CD4-positive, alpha-beta memory T cell (primary cell): ENCODE measurements at regions of chr2 and their contacts with region 1.

Region 1: DNA sequence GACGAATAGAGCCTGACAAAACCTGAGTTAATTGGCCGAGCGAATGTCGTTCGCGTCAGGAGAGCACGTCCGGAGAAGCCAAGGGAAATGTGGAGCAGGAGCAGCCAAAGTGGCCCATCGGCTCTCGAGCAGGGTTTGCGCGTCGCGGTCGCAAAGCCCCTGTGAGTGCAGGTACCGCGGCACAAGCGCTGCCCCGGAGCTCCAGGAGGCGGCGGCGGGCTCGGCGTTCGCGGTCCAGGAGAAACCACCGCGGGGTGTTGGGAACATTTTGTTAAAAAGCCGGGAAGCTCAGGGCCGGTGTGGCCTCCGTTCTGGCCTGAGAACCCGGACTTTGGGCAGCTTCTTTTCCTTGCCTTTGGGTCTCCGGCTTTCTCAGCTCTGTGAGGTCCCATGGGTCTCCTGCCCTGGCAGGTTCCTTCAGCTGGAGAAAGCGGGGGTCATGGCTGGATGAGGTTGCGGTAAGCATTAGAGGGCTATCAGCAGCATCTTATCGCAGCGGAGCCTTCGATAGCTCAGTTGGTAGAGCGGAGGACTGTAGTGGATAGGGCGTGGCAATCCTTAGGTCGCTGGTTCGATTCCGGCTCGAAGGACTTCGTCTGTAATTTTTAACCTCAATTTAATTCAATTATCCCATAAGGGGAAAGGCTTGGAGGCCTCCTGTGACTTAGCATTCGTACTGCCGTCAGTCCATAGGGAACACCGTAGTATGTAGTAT is 1.0 kb upstream of the AGBL5 start:
- DNase-seq: peak; percentile 93 to 94 (median 93)
- H3K4me3 ChIP-seq: peak overlapping the region; percentile 89 to 93
- H3K4me3 Mint-ChIP-seq: peak overlapping the region; percentile 93 to 100 (median 99)
- H3K27ac ChIP-seq: peak overlapping the region; percentile 78
- H3K27ac Mint-ChIP-seq: peak overlapping the region; percentile 98 to 100 (median 100)
- H3K4me1 ChIP-seq: peaks cover 14% of the 10 kb centered on the region
- H3K4me1 Mint-ChIP-seq: peaks cover 14 to 28% (median 20%) of the 10 kb centered on the region in 4 donors
- H3K27me3 ChIP-seq: no peaks in the 10 kb centered on the region
- H3K27me3 Mint-ChIP-seq: peaks cover 6 to 13% of the 10 kb centered on the region in 2 donors

Region 2: DNA sequence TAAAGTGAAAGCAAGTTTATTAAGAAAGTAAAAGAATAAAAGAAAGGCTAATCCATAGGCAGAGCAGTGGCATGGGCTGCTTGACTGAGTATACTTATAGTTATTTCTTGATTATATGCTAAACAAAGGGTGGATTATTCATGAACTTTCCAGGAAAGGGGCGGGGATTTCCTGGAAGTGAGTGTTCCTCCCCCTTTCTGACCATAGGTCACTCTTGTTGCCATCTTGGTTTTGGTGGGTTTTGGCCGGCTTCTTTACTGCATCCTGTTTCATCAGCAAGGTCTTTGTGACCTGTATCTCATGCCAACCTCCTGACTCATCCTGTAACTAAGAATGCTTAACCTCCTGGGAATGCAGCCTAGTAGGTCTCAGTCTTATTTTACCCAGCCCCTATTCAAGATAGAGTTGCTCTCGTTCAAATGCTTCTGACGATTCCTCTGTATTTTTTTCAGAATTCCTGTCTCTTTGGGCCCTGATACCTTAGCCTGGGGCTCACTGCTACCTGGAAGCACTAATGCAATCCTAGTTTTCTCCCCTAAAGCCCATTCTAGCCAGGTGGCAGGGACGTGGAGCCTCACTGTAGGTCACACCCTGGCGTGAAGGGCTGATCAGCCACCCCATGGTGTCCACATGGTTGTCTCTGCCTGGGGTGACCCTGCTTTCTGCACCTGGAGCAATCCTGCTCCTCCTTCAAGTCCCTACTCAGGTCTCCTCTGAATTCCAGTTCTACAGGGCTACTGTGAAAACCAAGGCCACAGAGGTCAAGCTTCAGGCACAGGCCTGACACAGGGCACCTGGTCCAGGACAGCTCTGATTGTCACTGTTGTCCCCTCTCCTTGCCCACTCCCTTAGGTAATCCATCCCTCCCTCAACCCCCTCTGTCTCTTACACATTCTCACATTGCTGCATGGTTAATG is 292.3 kb before region 1 on chr2:
- CTCF ChIA-PET with region 1: no interaction called
- POLR2A ChIA-PET with region 1: no interaction called
- intact Hi-C with region 1: no loop called
- DNase-seq: no peak
- H3K4me3 ChIP-seq: no peak overlapping the region
- H3K4me3 Mint-ChIP-seq: no peak overlapping the region
- H3K27ac ChIP-seq: no peak overlapping the region
- H3K27ac Mint-ChIP-seq: peak overlapping the region in 1 of 7 donors; percentile 54
- H3K4me1 ChIP-seq: peaks cover under 1% of the 10 kb centered on the region
- H3K4me1 Mint-ChIP-seq: peaks cover 0 to under 1% (median 0%) of the 10 kb centered on the region in 4 donors
- H3K27me3 ChIP-seq: no peaks in the 10 kb centered on the region
- H3K27me3 Mint-ChIP-seq: peaks cover 1 to 3% of the 10 kb centered on the region in 2 donors

Region 3: GRCh38 chr2:27071277-27071989 is 21.0 kb after region 1 on chr2 and contains the start of gene OST4:
- CTCF ChIA-PET with region 1: interaction called, 14 read pairs
- POLR2A ChIA-PET with region 1: interaction called, 402 read pairs
- intact Hi-C with region 1: loop called (anchors 1 kb)
- DNase-seq: peak; percentile 87 to 91 (median 89)
- H3K4me3 ChIP-seq: peak within 1 kb of the TSS; percentile 95 to 97
- H3K4me3 Mint-ChIP-seq: peak within 1 kb of the TSS; percentile 92 to 98 (median 97)
- H3K27ac ChIP-seq: peak within 1 kb of the TSS; percentile 95
- H3K27ac Mint-ChIP-seq: peak within 1 kb of the TSS; percentile 93 to 99 (median 98)
- H3K4me1 ChIP-seq: peaks cover 62% of the 10 kb centered on the region
- H3K4me1 Mint-ChIP-seq: peaks cover 44 to 86% (median 70%) of the 10 kb centered on the region in 4 donors
- H3K27me3 ChIP-seq: no peaks in the 10 kb centered on the region
- H3K27me3 Mint-ChIP-seq: no peaks in the 10 kb centered on the region
- total RNA-seq, gene OST4: 269 to 296 TPM

Region 4: DNA sequence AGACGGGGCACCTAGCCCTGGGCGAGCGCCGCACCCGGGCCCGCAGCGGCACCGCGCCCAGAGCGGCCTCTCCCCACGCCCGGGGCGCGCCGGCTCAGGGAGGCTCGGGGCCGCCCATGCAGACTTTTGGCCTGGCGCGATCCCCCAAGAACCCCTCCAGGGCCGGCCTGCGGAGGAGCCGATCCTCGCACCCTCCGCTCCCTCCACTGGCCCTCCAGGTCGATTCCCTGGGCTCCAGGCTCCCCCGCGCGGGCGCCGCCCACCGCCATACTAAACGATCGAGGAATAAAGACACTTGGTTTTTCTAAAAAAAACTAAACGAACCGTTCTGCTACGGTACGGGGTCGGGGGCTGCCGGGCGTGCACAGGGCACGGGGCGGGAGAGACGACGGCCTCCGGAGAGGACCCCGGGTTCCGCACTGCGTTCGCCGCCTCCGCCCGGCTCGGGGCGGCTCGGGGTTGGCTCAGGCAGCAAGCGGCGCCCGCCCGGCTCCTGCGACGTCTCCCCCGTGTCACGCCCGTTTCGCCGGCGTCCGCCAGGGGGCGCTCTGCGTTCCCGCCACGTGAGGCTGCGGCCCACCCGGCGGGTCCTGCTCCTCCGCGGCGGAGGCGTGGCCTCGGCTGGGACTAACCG is 35.8 kb after region 1 on chr2:
- CTCF ChIA-PET with region 1: interaction called, 7 read pairs
- POLR2A ChIA-PET with region 1: interaction called, 402 read pairs
- intact Hi-C with region 1: loop called (anchors 1 kb)
- DNase-seq: peak; percentile 93 to 99 (median 98)
- H3K4me3 ChIP-seq: peak overlapping the region; percentile 11 to 75
- H3K4me3 Mint-ChIP-seq: peak overlapping the region; percentile 82 to 90 (median 86)
- H3K27ac ChIP-seq: peak overlapping the region; percentile 80
- H3K27ac Mint-ChIP-seq: peak overlapping the region; percentile 82 to 94 (median 89)
- H3K4me1 ChIP-seq: peaks cover 32% of the 10 kb centered on the region
- H3K4me1 Mint-ChIP-seq: peaks cover 9 to 37% (median 23%) of the 10 kb centered on the region in 4 donors
- H3K27me3 ChIP-seq: no peaks in the 10 kb centered on the region
- H3K27me3 Mint-ChIP-seq: no peaks in the 10 kb centered on the region

Region 5: DNA sequence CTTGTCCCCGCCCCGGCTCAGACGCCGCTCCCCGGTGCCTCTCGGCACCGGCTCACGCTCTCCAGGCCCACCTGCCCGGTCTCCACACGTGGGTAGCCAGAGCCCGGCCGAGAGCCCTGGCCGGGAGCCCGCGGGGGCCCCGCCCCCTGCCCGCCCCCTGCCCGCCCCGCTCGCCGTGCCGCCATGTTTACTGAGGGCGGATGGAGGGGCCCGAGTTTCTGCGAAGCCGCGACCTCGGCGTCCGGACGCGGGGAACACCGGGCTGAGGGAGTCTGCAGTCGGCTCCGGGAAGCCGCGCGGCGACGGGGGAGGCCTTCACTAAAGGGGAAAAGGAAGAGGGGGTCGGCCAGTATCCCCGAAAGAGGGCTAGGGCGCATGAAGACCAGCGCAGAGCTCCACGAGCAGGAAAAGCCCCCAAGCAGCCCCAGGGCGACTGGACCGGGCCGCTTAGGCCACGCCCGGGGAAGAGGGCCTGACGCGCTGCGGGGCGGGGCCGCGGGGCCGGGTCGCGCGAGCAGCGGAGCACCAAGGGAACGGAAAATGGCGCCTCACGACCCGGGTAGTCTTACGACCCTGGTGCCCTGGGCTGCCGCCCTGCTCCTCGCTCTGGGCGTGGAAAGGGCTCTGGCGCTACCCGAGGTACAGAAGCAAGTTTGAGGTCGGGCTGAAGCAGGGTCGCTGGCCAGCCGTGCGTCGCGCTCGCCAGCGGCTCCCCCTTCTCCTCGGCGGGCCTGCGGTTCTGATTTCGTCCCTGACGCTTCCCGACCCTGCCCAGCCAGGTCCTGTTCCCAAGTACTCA is 161.6 kb after region 1 on chr2 and contains the starts of genes ATRAID and SLC5A6:
- CTCF ChIA-PET with region 1: no interaction called
- POLR2A ChIA-PET with region 1: interaction called, 12 read pairs
- intact Hi-C with region 1: no loop called
- DNase-seq: peak; percentile 89 to 93 (median 92)
- H3K4me3 ChIP-seq: peak within 1 kb of the TSS; percentile 71 to 94
- H3K4me3 Mint-ChIP-seq: peak within 1 kb of the TSS; percentile 95 to 100 (median 100)
- H3K27ac ChIP-seq: peak within 1 kb of the TSS; percentile 99
- H3K27ac Mint-ChIP-seq: peak within 1 kb of the TSS; percentile 97 to 100 (median 100)
- H3K4me1 ChIP-seq: peaks cover 22% of the 10 kb centered on the region
- H3K4me1 Mint-ChIP-seq: peaks cover 23 to 37% (median 31%) of the 10 kb centered on the region in 4 donors
- H3K27me3 ChIP-seq: no peaks in the 10 kb centered on the region
- H3K27me3 Mint-ChIP-seq: no peaks in the 10 kb centered on the region
- total RNA-seq, gene ATRAID: 103 to 109 TPM
- total RNA-seq, gene SLC5A6: 21.9 to 25.1 TPM